K562 (cell line): ENCODE measurements at regions of chr2 and their contacts with region 1.

Region 1: GRCh38 chr2:7083577-7084509 is 166.6 kb downstream of the RNF144A start:
- DNase-seq: peak; percentile 11 to 68 (median 30)
- ATAC-seq: peak; percentile 95
- H3K4me3 ChIP-seq: no peak overlapping the region
- H3K27ac ChIP-seq: no peak overlapping the region
- H3K4me1 ChIP-seq: no peaks in the 10 kb centered on the region
- H3K27me3 ChIP-seq: peaks cover 2 to 6% of the 10 kb centered on the region in 2 experiments; a peak in 2 of 5 replicates
- CTCF ChIP-seq: peak; percentile 71 to 86 (median 82)
- EP300 ChIP-seq: no peak
- POLR2A ChIP-seq: no peak
- RAD21 ChIP-seq: peak; percentile 64 to 88

Region 2: DNA sequence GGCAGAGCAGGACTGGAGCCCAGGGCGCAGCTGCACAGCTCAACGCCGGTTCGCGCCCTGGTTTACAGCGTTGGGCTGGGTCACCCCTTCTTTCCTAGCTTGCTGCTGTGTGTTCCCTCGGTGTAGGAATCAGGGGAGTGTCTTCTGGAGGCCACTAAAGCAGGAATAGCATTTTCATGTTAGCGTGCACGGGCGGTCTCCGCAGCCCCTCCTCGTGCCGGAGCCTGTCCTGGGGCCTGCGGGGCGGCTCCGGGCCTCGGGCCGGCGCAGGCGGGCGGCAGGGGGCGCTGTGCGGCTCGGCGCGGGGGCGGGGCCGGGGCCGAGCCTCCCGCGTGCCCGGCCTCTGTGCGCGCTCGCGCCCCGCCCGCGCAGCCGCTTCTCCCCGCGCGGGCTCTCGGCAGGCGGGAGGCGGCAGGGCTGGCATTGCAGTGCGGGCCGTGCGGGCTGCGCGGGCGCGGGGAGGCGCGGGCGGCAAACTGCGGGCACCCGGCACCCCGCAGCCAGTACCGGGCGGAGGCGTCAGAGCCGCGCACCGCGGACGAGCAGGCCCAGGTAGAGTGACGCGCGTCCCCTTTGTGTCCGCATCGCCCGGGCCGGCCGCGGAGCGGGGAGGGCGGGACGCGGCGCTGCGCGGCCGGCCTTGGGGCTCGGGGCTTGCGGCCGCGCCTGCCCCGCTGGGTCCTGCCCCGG is 166.6 kb before region 1 on chr2 and contains the start of gene RNF144A:
- CTCF ChIA-PET with region 1: interaction called, 3 read pairs
- POLR2A ChIA-PET with region 1: no interaction called
- in situ Hi-C with region 1: no loop called
- intact Hi-C with region 1: loop called (anchors 5 kb)
- DNase-seq: peak; percentile 75 to 93 (median 92)
- ATAC-seq: peak; percentile 88
- H3K4me3 ChIP-seq: peak within 1 kb of the TSS; percentile 61
- H3K27ac ChIP-seq: peak within 1 kb of the TSS; percentile 51; the same call in 1 of the 3 replicates
- H3K4me1 ChIP-seq: peaks cover 3 to 25% of the 10 kb centered on the region in 2 experiments; a peak in 4 of 5 replicates
- H3K27me3 ChIP-seq: 0 out of 5 replicates have a peak, but pooled peaks cover 0 to 4% of the 10 kb centered on the region in 2 experiments
- CTCF ChIP-seq: peak; percentile 25 to 54 (median 53); a peak in 4 of 6 replicates
- EP300 ChIP-seq: no peak
- POLR2A ChIP-seq: no peak
- RAD21 ChIP-seq: peak in 1 of 2 experiments; percentile 39; a peak in 2 of 4 replicates
- polyA plus RNA-seq, gene RNF144A: 0.96 to 1.4 TPM

Region 3: GRCh38 chr2:7037340-7038333 is 46.2 kb before region 1 on chr2:
- CTCF ChIA-PET with region 1: interaction called, 5 read pairs
- POLR2A ChIA-PET with region 1: no interaction called
- in situ Hi-C with region 1: no loop called
- intact Hi-C with region 1: loop called (anchors 2 kb)
- DNase-seq: peak; percentile 68 to 77 (median 70)
- ATAC-seq: peak; percentile 98
- H3K4me3 ChIP-seq: no peak overlapping the region
- H3K27ac ChIP-seq: no peak overlapping the region
- H3K4me1 ChIP-seq: no peaks in the 10 kb centered on the region
- H3K27me3 ChIP-seq: no peaks in the 10 kb centered on the region
- CTCF ChIP-seq: peak; percentile 79 to 86 (median 82)
- EP300 ChIP-seq: no peak
- POLR2A ChIP-seq: no peak
- RAD21 ChIP-seq: peak; percentile 24 to 64